Activated naive CD8-positive, alpha-beta T cell treated with anti-CD3 and anti-CD28 coated beads, Interleukin-2, amount 10 ng/mL, durations not matched to agents 7 days and 5 days (primary cell): ENCODE measurements at regions of chr2 and their contacts with region 1.

Region 1: DNA sequence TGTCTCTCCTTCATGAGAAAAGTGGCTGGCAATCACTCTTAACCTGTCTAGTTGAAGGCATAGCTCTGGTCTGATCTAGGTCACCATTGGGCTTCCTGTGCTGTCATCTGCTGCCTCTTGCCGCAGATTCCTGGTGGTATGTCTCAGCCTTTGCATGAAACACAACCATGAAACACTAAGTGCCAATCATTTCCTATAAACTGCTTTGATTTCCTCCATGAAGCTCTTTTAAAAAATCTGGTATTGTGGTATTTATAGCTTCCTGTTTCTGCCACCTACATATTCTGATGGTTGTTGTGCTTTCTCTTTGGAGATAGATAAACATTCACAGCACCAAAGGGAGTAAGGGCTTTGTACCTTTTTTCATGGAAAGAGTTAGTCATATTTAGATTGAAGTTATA is 120.0 kb upstream of the EPC2 start:
- DNase-seq: no peak
- ATAC-seq: peak; percentile 89
- H3K4me3 Mint-ChIP-seq: peak overlapping the region; percentile 65
- H3K27ac Mint-ChIP-seq: peak overlapping the region; percentile 86
- H3K4me1 Mint-ChIP-seq: peaks cover 64% of the 10 kb centered on the region
- H3K27me3 Mint-ChIP-seq: no peaks in the 10 kb centered on the region

Region 2: GRCh38 chr2:148540022-148540421 is 15.5 kb after region 1 on chr2:
- POLR2A ChIA-PET with region 1: interaction called, 18 read pairs
- DNase-seq: peak; percentile 49
- ATAC-seq: peak; percentile 82
- H3K4me3 Mint-ChIP-seq: peak overlapping the region; percentile 67
- H3K27ac Mint-ChIP-seq: peak overlapping the region; percentile 77
- H3K4me1 Mint-ChIP-seq: peaks cover 25% of the 10 kb centered on the region
- H3K27me3 Mint-ChIP-seq: no peaks in the 10 kb centered on the region

Region 3: DNA sequence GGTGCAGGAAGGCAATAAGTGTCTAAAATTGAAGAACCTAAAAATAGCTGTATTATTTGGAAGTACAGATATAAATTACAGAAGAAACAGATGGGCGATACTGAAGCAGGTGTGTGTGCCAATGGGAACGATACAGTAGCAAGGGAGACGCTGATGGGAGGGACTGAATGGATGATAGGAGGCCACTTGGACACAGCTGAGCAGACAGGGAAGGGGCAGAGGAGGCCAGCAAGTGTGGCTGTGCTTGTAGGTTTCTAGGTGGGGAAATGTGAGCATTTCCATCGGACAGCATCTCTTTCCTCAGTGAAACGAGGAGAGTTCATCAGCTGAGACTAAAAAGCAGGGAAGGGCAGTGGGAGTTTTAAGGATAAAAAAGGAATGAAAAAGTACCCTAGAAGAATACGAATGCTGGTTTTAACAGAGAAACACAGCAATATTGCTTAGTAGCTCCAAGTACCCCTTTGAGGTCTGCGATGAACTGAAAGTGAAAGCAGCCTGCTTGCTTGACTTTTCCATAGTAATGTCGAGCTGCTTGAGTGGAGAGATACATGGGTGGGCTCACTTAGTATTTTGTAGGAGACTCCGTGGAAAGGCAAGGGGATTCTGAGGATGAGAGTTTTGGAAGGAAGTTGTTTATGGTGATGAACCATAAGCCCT is 28.3 kb after region 1 on chr2:
- POLR2A ChIA-PET with region 1: interaction called, 25 read pairs
- DNase-seq: no peak
- ATAC-seq: peak; percentile 80
- H3K4me3 Mint-ChIP-seq: no peak overlapping the region
- H3K27ac Mint-ChIP-seq: no peak overlapping the region
- H3K4me1 Mint-ChIP-seq: peaks cover 5% of the 10 kb centered on the region
- H3K27me3 Mint-ChIP-seq: no peaks in the 10 kb centered on the region